ENCODE measurements at regions of chr2 and their contacts with region 1.

Region 1: GRCh38 chr2:69514406-69514805 is 77.2 kb upstream of the NFU1 start:
- DNase-seq: no peak
- ATAC-seq: no peak
- H3K4me3 Mint-ChIP-seq: no peak overlapping the region
- H3K27ac Mint-ChIP-seq: no peak overlapping the region
- H3K4me1 Mint-ChIP-seq: peaks cover 5% of the 10 kb centered on the region
- H3K27me3 Mint-ChIP-seq: no peaks in the 10 kb centered on the region

Region 2: DNA sequence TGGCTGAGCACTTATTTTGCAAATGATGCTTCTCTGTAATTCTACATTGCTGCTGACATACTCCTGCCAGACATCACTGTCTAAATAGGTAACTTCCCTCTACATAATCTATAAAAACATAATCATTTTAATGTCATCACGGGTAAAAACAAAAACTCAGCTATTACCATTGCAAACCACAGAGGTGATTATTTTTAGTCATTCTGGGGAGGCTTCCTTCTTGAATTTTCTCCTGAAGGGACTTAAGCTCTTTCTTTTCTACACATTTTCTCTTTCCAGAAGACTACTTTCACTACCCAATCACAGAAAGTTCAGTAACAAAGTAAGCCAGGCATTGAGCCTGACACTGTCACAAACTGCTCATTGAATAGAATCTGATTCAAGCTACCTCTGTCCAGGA is 36.8 kb before region 1 on chr2:
- CTCF ChIA-PET with region 1: interaction called, 3 read pairs
- POLR2A ChIA-PET with region 1: interaction called, 11 read pairs
- intact Hi-C with region 1: no loop called
- DNase-seq: no peak
- ATAC-seq: peak; percentile 82
- H3K4me3 Mint-ChIP-seq: no peak overlapping the region
- H3K27ac Mint-ChIP-seq: peak overlapping the region; percentile 29
- H3K4me1 Mint-ChIP-seq: peaks cover 52% of the 10 kb centered on the region
- H3K27me3 Mint-ChIP-seq: no peaks in the 10 kb centered on the region